Left cardiac atrium (tissue), 4 donors: ENCODE measurements at regions of chr3 and their contacts with region 1.

Region 1: GRCh38 chr3:101381809-101382208 is 61.4 kb upstream of the IMPG2 start:
- DNase-seq: no peak
- ATAC-seq: peak; percentile 27 to 43

Region 2: GRCh38 chr3:101229681-101230080 is 152.1 kb before region 1 on chr3:
- intact Hi-C with region 1: loop called in 1 of 2 experiments (anchors 10 kb)
- DNase-seq: no peak
- ATAC-seq: no peak

Region 3: GRCh38 chr3:101646726-101647125 is 264.9 kb after region 1 on chr3:
- intact Hi-C with region 1: no loop called
- DNase-seq: no peak
- ATAC-seq: no peak